HepG2 (cell line): ENCODE measurements at regions of chr10 and their contacts with region 1.

Region 1: DNA sequence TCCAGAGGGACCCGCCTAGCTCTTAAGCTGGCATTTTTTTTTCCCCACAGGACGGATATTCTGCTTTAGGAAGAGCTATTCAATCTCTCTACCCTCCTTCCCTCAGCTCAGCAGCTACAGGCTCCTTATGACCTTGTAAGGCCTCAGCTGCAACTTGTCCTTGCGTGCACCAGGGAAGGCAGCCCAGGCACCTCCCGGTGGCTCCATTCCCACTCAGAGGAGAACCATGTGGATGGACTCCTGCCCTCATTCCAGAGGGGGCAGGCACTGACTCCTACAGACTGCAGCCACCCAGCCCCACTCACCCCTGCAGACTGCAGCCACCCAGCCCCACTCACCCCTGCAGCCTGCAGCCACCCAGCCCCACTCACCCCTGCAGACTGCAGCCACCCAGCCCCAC is 73.7 kb downstream of the ITIH5 start:
- DNase-seq: no peak
- ATAC-seq: peak; percentile 55
- H3K4me3 ChIP-seq: no peak overlapping the region
- H3K27ac ChIP-seq: no peak overlapping the region
- H3K4me1 ChIP-seq: no peaks in the 10 kb centered on the region
- H3K27me3 ChIP-seq: no peaks in the 10 kb centered on the region
- CTCF ChIP-seq: no peak
- EP300 ChIP-seq: no peak
- POLR2A ChIP-seq: no peak
- RAD21 ChIP-seq: no peak

Region 2: GRCh38 chr10:7547829-7548228 is 45.2 kb before region 1 on chr10:
- CTCF ChIA-PET with region 1: no interaction called
- POLR2A ChIA-PET with region 1: interaction called, 3 read pairs
- in situ Hi-C with region 1: loop called (anchors 5 kb)
- intact Hi-C with region 1: no loop called
- DNase-seq: no peak
- ATAC-seq: no peak
- H3K4me3 ChIP-seq: no peak overlapping the region
- H3K27ac ChIP-seq: no peak overlapping the region
- H3K4me1 ChIP-seq: peaks cover 29% of the 10 kb centered on the region
- H3K27me3 ChIP-seq: no peaks in the 10 kb centered on the region
- CTCF ChIP-seq: no peak
- EP300 ChIP-seq: no peak
- POLR2A ChIP-seq: no peak
- RAD21 ChIP-seq: no peak